ENCODE measurements at regions of chr12 and their contacts with region 1.

Region 1: GRCh38 chr12:76083904-76084862 is at the start of gene NAP1L1:
- DNase-seq: peak; percentile 97
- H3K4me3 Mint-ChIP-seq: peak within 1 kb of the TSS; percentile 94
- H3K27ac Mint-ChIP-seq: peak within 1 kb of the TSS; percentile 98
- H3K4me1 Mint-ChIP-seq: peaks cover 47% of the 10 kb centered on the region
- H3K27me3 Mint-ChIP-seq: no peaks in the 10 kb centered on the region
- total RNA-seq, gene NAP1L1: 1,078 to 1,092 TPM

Region 2: DNA sequence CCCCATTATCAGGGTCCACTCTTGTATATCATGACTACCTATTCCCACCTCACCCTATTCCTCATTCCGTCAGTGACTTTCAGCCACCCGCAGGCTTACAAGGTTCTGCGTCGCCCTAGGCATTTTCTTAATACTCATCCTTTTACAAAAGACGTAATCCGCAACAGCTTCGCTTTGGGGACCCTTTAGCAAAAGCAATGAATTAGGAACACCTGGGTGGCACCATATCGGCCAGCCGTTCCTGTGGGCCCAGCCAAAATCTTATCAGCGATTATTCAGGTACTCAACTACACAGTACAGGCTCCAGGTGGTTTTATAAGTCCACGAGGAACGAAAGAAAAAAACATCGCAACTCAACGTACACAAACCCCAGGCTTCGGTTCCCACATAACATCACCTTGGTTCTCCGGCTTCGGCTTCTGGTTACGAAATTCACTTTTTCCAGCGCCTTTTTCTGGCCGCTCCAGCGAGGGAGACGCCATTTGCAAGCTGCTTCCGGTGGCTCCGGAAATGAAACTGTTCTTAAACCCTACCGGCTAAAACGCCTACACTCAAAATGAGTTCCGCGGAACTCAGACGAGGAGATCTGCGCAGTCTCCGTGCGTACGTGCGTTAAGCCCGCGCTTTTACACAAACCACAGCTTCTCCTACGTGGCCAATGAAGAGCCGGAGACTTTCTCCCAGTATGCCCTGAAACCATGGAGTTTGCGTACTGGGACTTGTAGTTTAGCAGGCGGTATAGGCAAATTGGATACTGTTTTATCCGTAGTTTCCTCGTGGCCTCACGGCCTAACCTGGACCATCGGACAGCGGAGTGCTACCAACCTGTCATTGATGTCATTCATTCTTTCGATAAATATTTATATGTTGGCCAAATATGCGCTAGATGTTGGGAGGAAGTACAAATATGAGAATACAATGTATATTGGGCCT is 572.8 kb before region 1 on chr12 and contains the start of gene KRR1:
- CTCF ChIA-PET with region 1: no interaction called
- intact Hi-C with region 1: loop called (anchors 1 kb)
- DNase-seq: peak; percentile 95
- H3K4me3 Mint-ChIP-seq: peak within 1 kb of the TSS; percentile 95
- H3K27ac Mint-ChIP-seq: peak within 1 kb of the TSS; percentile 98
- H3K4me1 Mint-ChIP-seq: peaks cover 29% of the 10 kb centered on the region
- H3K27me3 Mint-ChIP-seq: no peaks in the 10 kb centered on the region
- total RNA-seq, gene KRR1: 81.1 to 83.9 TPM

Region 3: DNA sequence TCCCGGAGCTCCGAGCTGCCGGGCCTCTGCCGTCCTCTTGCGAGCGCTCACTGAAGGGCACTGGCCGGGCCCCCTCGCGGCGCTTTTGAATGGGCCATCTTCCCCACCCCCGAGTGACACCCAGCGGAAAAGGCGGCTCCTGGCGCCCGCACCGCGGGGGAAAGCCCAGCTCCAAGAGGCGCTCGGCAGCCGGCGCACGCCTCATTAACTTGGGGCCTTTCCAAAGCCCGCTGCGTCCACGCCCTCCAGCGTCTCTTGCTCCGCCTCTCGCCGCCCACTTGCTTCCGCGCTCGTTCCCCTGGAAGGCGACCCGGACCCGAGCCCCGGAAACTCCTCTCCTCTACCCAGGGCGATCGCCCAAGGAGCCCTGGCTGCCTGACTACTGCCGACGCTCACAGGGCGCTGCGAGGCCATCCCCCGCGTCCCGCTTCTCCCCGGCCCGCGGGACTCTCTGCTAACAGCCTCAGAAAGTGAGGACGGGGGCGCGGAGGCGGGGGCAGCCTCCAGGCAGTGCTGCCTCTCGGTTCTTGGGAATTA is 52.6 kb before region 1 on chr12 and contains the start of gene PHLDA1:
- CTCF ChIA-PET with region 1: interaction called, 6 read pairs
- intact Hi-C with region 1: loop called (anchors 1 kb)
- DNase-seq: peak; percentile 96
- H3K4me3 Mint-ChIP-seq: peak within 1 kb of the TSS; percentile 90
- H3K27ac Mint-ChIP-seq: peak within 1 kb of the TSS; percentile 91
- H3K4me1 Mint-ChIP-seq: peaks cover 29% of the 10 kb centered on the region
- H3K27me3 Mint-ChIP-seq: peaks cover 2% of the 10 kb centered on the region
- total RNA-seq, gene PHLDA1: 2.7 to 2.8 TPM

Region 4: DNA sequence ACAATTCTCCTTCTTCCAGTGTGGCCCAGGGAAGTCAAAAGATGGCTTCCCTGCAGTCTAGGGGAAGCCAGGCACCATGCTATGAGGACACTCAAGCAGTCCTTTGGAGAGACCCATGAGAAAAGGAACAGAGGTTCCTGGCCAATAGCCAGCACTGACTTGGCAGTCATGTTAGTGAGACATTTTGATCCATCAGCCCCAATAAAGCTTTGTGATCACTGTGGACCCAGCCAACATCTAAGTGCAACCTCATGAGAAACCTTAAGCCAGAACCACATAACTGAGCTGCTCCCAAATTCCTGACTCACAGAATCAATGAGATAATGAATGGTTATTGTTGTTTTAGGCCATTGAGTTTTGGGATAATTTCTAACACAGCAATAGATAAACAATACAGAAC is 51.3 kb after region 1 on chr12:
- CTCF ChIA-PET with region 1: no interaction called
- intact Hi-C with region 1: no loop called
- DNase-seq: no peak
- H3K4me3 Mint-ChIP-seq: no peak overlapping the region
- H3K27ac Mint-ChIP-seq: no peak overlapping the region
- H3K4me1 Mint-ChIP-seq: no peaks in the 10 kb centered on the region
- H3K27me3 Mint-ChIP-seq: no peaks in the 10 kb centered on the region

Region 5: DNA sequence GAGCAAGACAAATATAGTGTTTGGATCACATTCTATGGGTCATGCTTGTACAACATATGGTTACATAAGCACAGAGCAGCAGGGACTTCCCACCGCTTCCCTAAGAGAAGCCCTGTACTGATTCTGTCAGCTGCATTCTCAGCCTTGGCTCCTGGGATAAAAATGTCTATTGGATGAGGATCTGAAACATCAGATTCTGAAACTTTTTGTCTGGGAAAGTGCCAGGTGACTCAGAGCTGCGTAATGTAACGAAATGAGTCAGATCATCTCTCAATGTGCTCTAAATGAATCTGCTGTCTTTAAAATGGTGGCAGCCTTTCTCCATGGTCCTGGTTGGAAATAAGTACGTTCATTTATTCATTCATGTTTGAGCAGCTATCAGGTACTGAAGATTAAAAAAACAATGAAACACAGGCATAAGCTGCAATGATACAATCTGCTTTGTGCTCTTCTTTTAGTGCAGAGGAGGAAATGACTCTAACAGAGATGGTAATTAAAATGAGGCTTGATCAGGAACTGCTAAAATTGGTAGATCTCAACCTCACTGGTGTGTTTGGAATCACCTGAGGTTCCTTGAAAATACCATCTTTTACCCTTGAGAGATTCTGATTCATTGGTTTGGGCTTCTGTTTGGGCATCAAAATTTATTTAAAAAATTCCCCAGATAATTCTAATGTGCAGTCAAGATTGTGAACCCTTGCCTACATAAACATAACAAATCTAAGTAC is 99.4 kb after region 1 on chr12:
- CTCF ChIA-PET with region 1: no interaction called
- intact Hi-C with region 1: loop called (anchors 1 kb)
- DNase-seq: peak; percentile 76
- H3K4me3 Mint-ChIP-seq: no peak overlapping the region
- H3K27ac Mint-ChIP-seq: no peak overlapping the region
- H3K4me1 Mint-ChIP-seq: peaks cover 12% of the 10 kb centered on the region
- H3K27me3 Mint-ChIP-seq: peaks cover 46% of the 10 kb centered on the region

Region 6: GRCh38 chr12:76559400-76560085 is 475.4 kb after region 1 on chr12 and contains the start of gene OSBPL8:
- CTCF ChIA-PET with region 1: no interaction called
- intact Hi-C with region 1: loop called (anchors 1 kb)
- DNase-seq: peak; percentile 96
- H3K4me3 Mint-ChIP-seq: peak within 1 kb of the TSS; percentile 92
- H3K27ac Mint-ChIP-seq: peak within 1 kb of the TSS; percentile 96
- H3K4me1 Mint-ChIP-seq: peaks cover 34% of the 10 kb centered on the region
- H3K27me3 Mint-ChIP-seq: no peaks in the 10 kb centered on the region
- total RNA-seq, gene OSBPL8: 56.8 to 63.7 TPM

Region 7: GRCh38 chr12:77065361-77066204 is 981.4 kb after region 1 on chr12 and contains the start of gene E2F7:
- CTCF ChIA-PET with region 1: no interaction called
- intact Hi-C with region 1: loop called (anchors 5 kb)
- DNase-seq: peak; percentile 90
- H3K4me3 Mint-ChIP-seq: peak within 1 kb of the TSS; percentile 79
- H3K27ac Mint-ChIP-seq: peak within 1 kb of the TSS; percentile 47
- H3K4me1 Mint-ChIP-seq: peaks cover 10% of the 10 kb centered on the region
- H3K27me3 Mint-ChIP-seq: peaks cover 46% of the 10 kb centered on the region
- total RNA-seq, gene E2F7: 9.6 to 9.9 TPM